Vagina (tissue), 2 donors: ENCODE measurements at regions of chr3 and their contacts with region 1.

Region 1: GRCh38 chr3:71305231-71306206 is 278.0 kb downstream of the FOXP1 start:
- DNase-seq: no peak
- H3K4me3 ChIP-seq: peak overlapping the region; percentile 19 to 24
- H3K27ac ChIP-seq: peak overlapping the region; percentile 48
- H3K4me1 ChIP-seq: peaks cover 20% of the 10 kb centered on the region
- H3K27me3 ChIP-seq: no peaks in the 10 kb centered on the region
- CTCF ChIP-seq: no peak
- POLR2A ChIP-seq: no peak

Region 2: GRCh38 chr3:70716832-70717231 is 588.7 kb before region 1 on chr3:
- intact Hi-C with region 1: loop called (anchors 10 kb)
- DNase-seq: no peak
- H3K4me3 ChIP-seq: no peak overlapping the region
- H3K27ac ChIP-seq: no peak overlapping the region
- H3K4me1 ChIP-seq: peaks cover 4% of the 10 kb centered on the region
- H3K27me3 ChIP-seq: no peaks in the 10 kb centered on the region
- CTCF ChIP-seq: peak; percentile 24 to 61 (median 26)
- POLR2A ChIP-seq: no peak

Region 3: GRCh38 chr3:71466483-71466882 is 161.0 kb after region 1 on chr3:
- intact Hi-C with region 1: no loop called
- DNase-seq: no peak
- H3K4me3 ChIP-seq: no peak overlapping the region
- H3K27ac ChIP-seq: no peak overlapping the region
- H3K4me1 ChIP-seq: peaks cover 23% of the 10 kb centered on the region
- H3K27me3 ChIP-seq: no peaks in the 10 kb centered on the region
- CTCF ChIP-seq: no peak
- POLR2A ChIP-seq: no peak

Region 4: DNA sequence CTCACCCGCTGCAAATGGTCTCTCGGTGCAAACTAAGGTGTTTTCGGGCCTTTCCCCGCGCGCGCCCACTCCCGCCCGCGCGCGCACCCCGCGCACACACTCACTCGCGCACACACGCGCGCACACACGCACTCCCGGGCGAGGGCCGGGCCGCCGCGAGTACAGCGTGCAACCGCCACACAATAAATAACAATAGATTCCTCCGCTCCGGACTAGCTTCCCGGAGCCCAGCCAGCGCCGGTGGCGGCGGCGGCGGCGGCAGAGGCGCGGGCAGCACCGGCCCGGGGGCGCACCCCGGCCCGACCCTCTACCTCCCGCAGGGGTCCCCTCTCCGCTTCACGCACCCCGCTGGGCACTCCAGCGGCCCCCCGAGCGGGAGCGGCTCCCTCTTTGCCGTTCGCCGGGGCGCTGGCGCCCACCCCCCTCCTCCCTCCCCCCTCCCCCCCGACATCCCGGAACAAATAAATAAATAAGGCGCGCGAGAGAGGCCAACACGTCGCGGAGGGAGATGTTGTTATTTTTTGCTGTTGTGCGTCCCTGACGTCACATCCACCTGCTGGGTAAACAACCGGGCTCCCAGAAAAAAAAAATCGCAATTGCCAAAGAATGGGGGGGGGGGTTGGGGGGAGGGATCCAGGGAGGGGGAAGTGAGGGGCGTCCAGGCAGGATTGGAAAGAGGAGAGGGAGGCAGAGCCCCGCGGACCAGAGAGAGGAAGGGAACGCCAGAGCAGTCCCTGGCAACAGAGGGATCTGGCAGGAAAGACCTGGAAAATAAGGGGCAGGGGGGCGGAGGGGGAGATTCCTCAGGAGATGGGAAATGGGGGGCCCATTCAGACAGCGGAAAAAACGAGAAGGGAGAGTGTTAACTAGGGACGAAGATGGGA is 278.3 kb after region 1 on chr3 and contains the start of gene FOXP1:
- intact Hi-C with region 1: loop called (anchors 5 kb)
- DNase-seq: no peak
- H3K4me3 ChIP-seq: peak within 1 kb of the TSS; percentile 78 to 84
- H3K27ac ChIP-seq: peak within 1 kb of the TSS; percentile 98
- H3K4me1 ChIP-seq: peaks cover 22% of the 10 kb centered on the region
- H3K27me3 ChIP-seq: no peaks in the 10 kb centered on the region
- CTCF ChIP-seq: no peak
- POLR2A ChIP-seq: no peak
- total RNA-seq, gene FOXP1: 128 TPM